ENCODE measurements at regions of chr13 and their contacts with region 1.

Region 1: GRCh38 chr13:102596147-102597028 is at the start of gene TPP2:
- DNase-seq: peak; percentile 98 to 100
- ATAC-seq: peak; percentile 79 to 94 (median 85)
- H3K4me3 ChIP-seq: peak within 1 kb of the TSS; percentile 89
- H3K4me3 Mint-ChIP-seq: peak within 1 kb of the TSS; percentile 96
- H3K27ac ChIP-seq: peak within 1 kb of the TSS; percentile 98
- H3K27ac Mint-ChIP-seq: peak within 1 kb of the TSS; percentile 92 to 100
- H3K4me1 ChIP-seq: peaks cover 21% of the 10 kb centered on the region
- H3K4me1 Mint-ChIP-seq: peaks cover 69% of the 10 kb centered on the region in 2 donors
- H3K27me3 ChIP-seq: no peaks in the 10 kb centered on the region
- H3K27me3 Mint-ChIP-seq: no peaks in the 10 kb centered on the region
- CTCF ChIP-seq: no peak
- total RNA-seq, gene TPP2: 128 to 147 (median 136) TPM

Region 2: GRCh38 chr13:102394158-102395053 is 202.0 kb before region 1 on chr13:
- intact Hi-C with region 1: loop called (anchors 10 kb)
- DNase-seq: peak; percentile 91 to 98
- ATAC-seq: peak; percentile 88 to 93 (median 88)
- H3K4me3 ChIP-seq: peak overlapping the region; percentile 74
- H3K4me3 Mint-ChIP-seq: peak overlapping the region; percentile 92
- H3K27ac ChIP-seq: peak overlapping the region; percentile 33
- H3K27ac Mint-ChIP-seq: peak overlapping the region; percentile 65 to 89
- H3K4me1 ChIP-seq: peaks cover 15% of the 10 kb centered on the region
- H3K4me1 Mint-ChIP-seq: peaks cover 10 to 25% of the 10 kb centered on the region in 2 donors
- H3K27me3 ChIP-seq: peaks cover 8% of the 10 kb centered on the region
- H3K27me3 Mint-ChIP-seq: peaks cover 14 to 37% of the 10 kb centered on the region in 2 donors
- CTCF ChIP-seq: no peak

Region 3: DNA sequence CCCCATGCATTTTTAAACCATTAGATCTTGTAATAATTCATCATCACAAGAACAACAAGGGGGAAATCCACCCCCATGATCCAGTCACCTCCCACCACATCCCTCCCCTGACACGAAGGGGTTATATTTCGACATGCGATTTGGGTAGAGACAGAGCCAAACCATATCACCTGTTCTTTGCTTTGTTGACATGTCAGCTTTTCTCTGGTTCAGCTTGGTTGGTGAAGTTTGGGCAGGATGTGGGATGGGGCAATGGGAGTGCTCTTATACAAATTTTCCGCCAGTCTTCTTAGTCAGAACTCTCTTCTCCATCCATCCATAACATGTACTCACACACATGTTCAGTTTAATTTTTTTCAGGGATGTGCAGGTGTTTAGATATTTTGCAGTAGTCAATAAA is 13.3 kb after region 1 on chr13:
- intact Hi-C with region 1: no loop called
- DNase-seq: peak in 1 of 2 donors; percentile 27
- ATAC-seq: peak in 1 of 3 donors; percentile 21
- H3K4me3 ChIP-seq: no peak overlapping the region
- H3K4me3 Mint-ChIP-seq: no peak overlapping the region
- H3K27ac ChIP-seq: no peak overlapping the region
- H3K27ac Mint-ChIP-seq: peak overlapping the region; percentile 40 to 78
- H3K4me1 ChIP-seq: peaks cover 5% of the 10 kb centered on the region
- H3K4me1 Mint-ChIP-seq: peaks cover 52 to 54% of the 10 kb centered on the region in 2 donors
- H3K27me3 ChIP-seq: no peaks in the 10 kb centered on the region
- H3K27me3 Mint-ChIP-seq: no peaks in the 10 kb centered on the region
- CTCF ChIP-seq: no peak

Region 4: GRCh38 chr13:102657630-102658029 is 61.2 kb after region 1 on chr13:
- intact Hi-C with region 1: loop called (anchors 1 kb)
- DNase-seq: peak in 1 of 2 donors; percentile 22
- ATAC-seq: peak in 1 of 3 donors; percentile 38
- H3K4me3 ChIP-seq: no peak overlapping the region
- H3K4me3 Mint-ChIP-seq: no peak overlapping the region
- H3K27ac ChIP-seq: no peak overlapping the region
- H3K27ac Mint-ChIP-seq: no peak overlapping the region
- H3K4me1 ChIP-seq: no peaks in the 10 kb centered on the region
- H3K4me1 Mint-ChIP-seq: peaks cover 0 to 6% of the 10 kb centered on the region in 2 donors
- H3K27me3 ChIP-seq: no peaks in the 10 kb centered on the region
- H3K27me3 Mint-ChIP-seq: no peaks in the 10 kb centered on the region
- CTCF ChIP-seq: peak; percentile 28

Region 5: GRCh38 chr13:102773441-102774215 is 177.2 kb after region 1 on chr13 and contains the start of gene TEX30:
- intact Hi-C with region 1: loop called (anchors 1 kb)
- DNase-seq: peak; percentile 88 to 93
- ATAC-seq: peak; percentile 91 to 98 (median 92)
- H3K4me3 ChIP-seq: peak within 1 kb of the TSS; percentile 83
- H3K4me3 Mint-ChIP-seq: peak within 1 kb of the TSS; percentile 93
- H3K27ac ChIP-seq: peak within 1 kb of the TSS; percentile 86
- H3K27ac Mint-ChIP-seq: peak within 1 kb of the TSS; percentile 90 to 96
- H3K4me1 ChIP-seq: peaks cover 30% of the 10 kb centered on the region
- H3K4me1 Mint-ChIP-seq: peaks cover 38 to 46% of the 10 kb centered on the region in 2 donors
- H3K27me3 ChIP-seq: no peaks in the 10 kb centered on the region
- H3K27me3 Mint-ChIP-seq: no peaks in the 10 kb centered on the region
- CTCF ChIP-seq: no peak
- total RNA-seq, gene TEX30: 8.7 to 10.3 (median 9.3) TPM

Region 6: GRCh38 chr13:102845630-102846260 is 249.4 kb after region 1 on chr13 and contains the start of gene ERCC5:
- intact Hi-C with region 1: loop called (anchors 1 kb)
- DNase-seq: peak; percentile 97 to 99
- ATAC-seq: peak; percentile 75 to 90 (median 81)
- H3K4me3 ChIP-seq: peak within 1 kb of the TSS; percentile 96
- H3K4me3 Mint-ChIP-seq: peak within 1 kb of the TSS; percentile 99
- H3K27ac ChIP-seq: peak within 1 kb of the TSS; percentile 98
- H3K27ac Mint-ChIP-seq: peak within 1 kb of the TSS; percentile 96 to 98
- H3K4me1 ChIP-seq: peaks cover 20% of the 10 kb centered on the region
- H3K4me1 Mint-ChIP-seq: peaks cover 41 to 42% of the 10 kb centered on the region in 2 donors
- H3K27me3 ChIP-seq: no peaks in the 10 kb centered on the region
- H3K27me3 Mint-ChIP-seq: no peaks in the 10 kb centered on the region
- CTCF ChIP-seq: no peak
- total RNA-seq, gene ERCC5: 110 to 127 (median 126) TPM

Measured in natural killer cell (primary cell).